ENCODE measurements at regions of chr9 and their contacts with region 1.

Region 1: DNA sequence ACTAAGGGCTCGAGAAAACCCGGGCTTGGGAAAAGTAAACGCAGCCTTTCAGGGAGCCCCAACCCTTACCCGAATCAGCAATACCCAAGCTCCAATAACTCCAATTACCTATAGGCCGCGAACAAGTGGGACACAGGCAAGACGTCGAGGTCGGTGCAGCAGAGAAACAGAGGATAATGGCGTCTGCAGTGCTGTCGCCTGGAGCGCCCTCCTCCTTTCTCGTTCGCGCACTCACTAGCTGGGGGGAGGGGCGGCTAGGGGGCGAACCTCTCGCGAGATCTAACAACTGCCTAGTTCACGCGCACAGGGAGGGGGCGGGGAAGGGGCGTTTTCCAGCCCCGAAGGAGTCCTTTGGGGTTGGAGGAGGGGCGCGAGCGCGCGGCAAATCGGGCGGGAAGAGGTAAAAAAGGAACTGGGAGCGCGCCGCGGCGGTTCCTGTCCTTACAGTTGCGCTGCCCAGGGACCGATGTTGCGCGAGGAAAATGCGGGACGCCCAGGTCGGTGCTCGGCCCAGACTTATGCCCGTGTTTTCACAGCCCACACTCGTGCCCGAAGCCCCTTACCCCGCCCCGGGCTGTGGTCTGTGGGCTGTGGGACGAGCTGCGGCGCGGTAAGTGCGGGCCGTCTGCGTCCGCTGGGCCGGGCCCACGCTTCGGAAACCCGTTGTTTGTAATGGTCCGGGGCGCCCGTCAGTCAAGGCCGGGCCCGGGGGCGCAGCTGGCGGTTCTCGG is at the start of gene RMI1:
- DNase-seq: peak; percentile 99
- ATAC-seq: peak; percentile 73
- H3K4me3 Mint-ChIP-seq: peak within 1 kb of the TSS; percentile 95
- H3K27ac Mint-ChIP-seq: peak within 1 kb of the TSS; percentile 99
- H3K4me1 Mint-ChIP-seq: peaks cover 49% of the 10 kb centered on the region
- H3K27me3 Mint-ChIP-seq: no peaks in the 10 kb centered on the region
- total RNA-seq, gene RMI1: 23.3 to 23.6 TPM

Region 2: GRCh38 chr9:83327323-83327722 is 653.2 kb before region 1 on chr9:
- CTCF ChIA-PET with region 1: no interaction called
- POLR2A ChIA-PET with region 1: no interaction called
- DNase-seq: no peak
- ATAC-seq: no peak
- H3K4me3 Mint-ChIP-seq: no peak overlapping the region
- H3K27ac Mint-ChIP-seq: no peak overlapping the region
- H3K4me1 Mint-ChIP-seq: no peaks in the 10 kb centered on the region
- H3K27me3 Mint-ChIP-seq: no peaks in the 10 kb centered on the region

Region 3: GRCh38 chr9:83775932-83776331 is 204.6 kb before region 1 on chr9:
- CTCF ChIA-PET with region 1: no interaction called
- POLR2A ChIA-PET with region 1: no interaction called
- DNase-seq: no peak
- ATAC-seq: no peak
- H3K4me3 Mint-ChIP-seq: no peak overlapping the region
- H3K27ac Mint-ChIP-seq: no peak overlapping the region
- H3K4me1 Mint-ChIP-seq: no peaks in the 10 kb centered on the region
- H3K27me3 Mint-ChIP-seq: no peaks in the 10 kb centered on the region

Region 4: GRCh38 chr9:83920927-83921707 is 59.4 kb before region 1 on chr9 and contains the start of gene KIF27:
- CTCF ChIA-PET with region 1: interaction called, 5 read pairs
- POLR2A ChIA-PET with region 1: interaction called, 32 read pairs
- DNase-seq: peak; percentile 98
- ATAC-seq: peak; percentile 91
- H3K4me3 Mint-ChIP-seq: peak within 1 kb of the TSS; percentile 82
- H3K27ac Mint-ChIP-seq: peak within 1 kb of the TSS; percentile 90
- H3K4me1 Mint-ChIP-seq: peaks cover 17% of the 10 kb centered on the region
- H3K27me3 Mint-ChIP-seq: no peaks in the 10 kb centered on the region
- total RNA-seq, gene KIF27: 1.9 to 3.2 TPM

Region 5: GRCh38 chr9:83965350-83966208 is 15.0 kb before region 1 on chr9:
- CTCF ChIA-PET with region 1: interaction called, 4 read pairs
- POLR2A ChIA-PET with region 1: interaction called, 30 read pairs
- DNase-seq: no peak
- ATAC-seq: peak; percentile 24
- H3K4me3 Mint-ChIP-seq: no peak overlapping the region
- H3K27ac Mint-ChIP-seq: no peak overlapping the region
- H3K4me1 Mint-ChIP-seq: peaks cover 4% of the 10 kb centered on the region
- H3K27me3 Mint-ChIP-seq: no peaks in the 10 kb centered on the region

Measured in activated CD8-positive, alpha-beta T cell treated with anti-CD3 and anti-CD28 coated beads, Interleukin-2, amount 10 ng/mL, durations not matched to agents 7 days and 5 days (primary cell).